GM12878 (cell line): ENCODE measurements at regions of chr3 and their contacts with region 1.

Region 1: DNA sequence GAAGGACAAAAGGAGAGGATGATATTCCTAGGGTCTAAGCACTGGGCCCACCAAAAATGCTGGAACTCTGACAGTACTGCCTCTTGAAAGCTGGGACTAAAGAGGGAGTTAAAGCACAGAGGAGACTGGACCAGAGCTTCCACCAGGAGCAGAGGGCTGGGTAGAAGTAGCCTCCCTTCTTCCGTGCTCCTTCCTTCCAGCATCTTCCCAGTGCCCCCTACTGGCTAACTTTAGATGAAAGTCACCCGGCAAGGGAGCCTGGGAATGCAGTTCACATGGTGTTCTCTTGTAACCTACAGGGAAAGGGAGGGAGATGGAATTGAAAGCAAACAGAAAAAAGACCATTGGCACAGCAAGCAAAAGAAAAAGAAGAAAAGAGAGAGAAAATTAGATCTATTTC is 106.1 kb upstream of the COL8A1 start:
- DNase-seq: no peak
- ATAC-seq: peak; percentile 84
- H3K4me3 ChIP-seq: no peak overlapping the region
- H3K27ac ChIP-seq: no peak overlapping the region
- H3K4me1 ChIP-seq: no peaks in the 10 kb centered on the region
- H3K27me3 ChIP-seq: no peaks in the 10 kb centered on the region
- CTCF ChIP-seq: peak; percentile 57 to 82 (median 78)
- EP300 ChIP-seq: no peak
- POLR2A ChIP-seq: no peak
- RAD21 ChIP-seq: peak; percentile 89

Region 2: GRCh38 chr3:99114565-99115291 is 417.5 kb before region 1 on chr3:
- CTCF ChIA-PET with region 1: interaction called, 4 read pairs
- POLR2A ChIA-PET with region 1: no interaction called
- RAD21 ChIA-PET with region 1: interaction called, 4 read pairs
- SMC1A ChIA-PET with region 1: no interaction called
- in situ Hi-C with region 1: no loop called
- intact Hi-C with region 1: loop called (anchors 10 kb)
- DNase-seq: no peak
- ATAC-seq: peak; percentile 87
- H3K4me3 ChIP-seq: no peak overlapping the region
- H3K27ac ChIP-seq: no peak overlapping the region
- H3K4me1 ChIP-seq: no peaks in the 10 kb centered on the region
- H3K27me3 ChIP-seq: no peaks in the 10 kb centered on the region
- CTCF ChIP-seq: peak; percentile 34 to 72 (median 61); a peak in 5 of 6 replicates
- EP300 ChIP-seq: no peak
- POLR2A ChIP-seq: no peak
- RAD21 ChIP-seq: peak; percentile 98

Region 3: DNA sequence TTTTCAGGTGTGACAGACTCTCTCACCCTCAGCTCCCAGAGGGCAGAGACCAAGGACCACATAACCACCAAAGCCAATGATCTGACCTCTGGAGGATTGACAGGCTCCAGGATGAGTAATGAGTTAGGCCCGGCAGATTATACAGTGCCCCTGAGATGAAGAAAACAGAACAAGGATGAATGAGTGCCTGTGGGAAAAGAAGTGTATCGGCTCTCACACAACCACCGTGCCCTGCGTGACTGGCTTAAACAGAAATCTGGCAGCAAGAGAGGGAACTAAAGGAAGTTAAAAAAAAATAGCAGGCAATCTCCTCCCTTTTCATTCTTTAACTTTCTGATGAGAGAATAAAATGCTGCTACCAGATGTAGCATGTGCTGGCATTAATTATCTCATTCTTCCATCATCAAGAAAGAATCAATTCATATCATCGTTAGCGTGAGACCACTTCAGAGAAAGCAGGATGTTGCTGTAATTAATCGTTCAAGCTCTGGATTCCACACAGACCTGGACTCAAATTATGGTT is 121.4 kb before region 1 on chr3:
- CTCF ChIA-PET with region 1: interaction called, 13 read pairs
- POLR2A ChIA-PET with region 1: no interaction called
- RAD21 ChIA-PET with region 1: interaction called, 7 read pairs
- SMC1A ChIA-PET with region 1: interaction called, 4 read pairs
- in situ Hi-C with region 1: no loop called
- intact Hi-C with region 1: no loop called
- DNase-seq: peak; percentile 48
- ATAC-seq: peak; percentile 87
- H3K4me3 ChIP-seq: no peak overlapping the region
- H3K27ac ChIP-seq: no peak overlapping the region; the same call in 1 of the 2 replicates
- H3K4me1 ChIP-seq: no peaks in the 10 kb centered on the region; the same call in 1 of the 2 replicates
- H3K27me3 ChIP-seq: no peaks in the 10 kb centered on the region
- CTCF ChIP-seq: no peak
- EP300 ChIP-seq: no peak
- POLR2A ChIP-seq: no peak
- RAD21 ChIP-seq: 0 out of 2 replicates have a peak, but pooled peaks have one; percentile 6

Region 4: DNA sequence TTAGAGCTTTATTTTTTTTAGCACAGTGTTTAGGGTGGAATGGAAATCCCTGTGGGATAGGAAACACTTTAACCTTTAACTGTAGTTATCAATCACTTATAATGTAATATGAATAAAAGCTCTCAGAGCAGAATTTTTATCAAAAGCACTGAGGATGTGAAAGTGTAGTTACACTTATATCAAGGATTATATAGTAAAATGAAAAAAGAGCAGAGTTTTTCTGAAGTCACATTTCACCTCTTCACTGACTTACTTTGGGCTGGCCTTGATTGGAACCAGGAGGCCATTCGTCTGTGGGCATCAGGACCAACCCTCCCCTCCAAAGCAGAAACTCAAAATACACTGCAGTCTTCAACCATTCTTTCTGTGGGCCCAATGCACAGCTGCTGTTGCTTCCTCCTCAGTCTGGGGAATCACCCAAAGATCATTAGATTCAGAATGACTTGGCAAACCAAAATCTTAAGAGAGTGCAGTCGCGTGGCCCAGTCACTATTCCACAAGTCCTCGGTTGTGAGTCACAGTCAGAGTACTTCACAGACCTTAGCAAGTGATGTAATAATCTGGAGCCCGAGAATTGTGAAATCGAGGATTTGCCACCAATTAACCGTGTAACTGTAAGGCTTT is 26.5 kb before region 1 on chr3:
- CTCF ChIA-PET with region 1: interaction called, 303 read pairs
- POLR2A ChIA-PET with region 1: interaction called, 3 read pairs
- RAD21 ChIA-PET with region 1: interaction called, 90 read pairs
- SMC1A ChIA-PET with region 1: interaction called, 270 read pairs
- in situ Hi-C with region 1: no loop called
- intact Hi-C with region 1: loop called (anchors 2 kb)
- DNase-seq: peak; percentile 91
- ATAC-seq: peak; percentile 97
- H3K4me3 ChIP-seq: no peak overlapping the region
- H3K27ac ChIP-seq: peak overlapping the region; percentile 41
- H3K4me1 ChIP-seq: peaks cover 6% of the 10 kb centered on the region; the same call in 1 of the 2 replicates
- H3K27me3 ChIP-seq: no peaks in the 10 kb centered on the region
- CTCF ChIP-seq: no peak
- EP300 ChIP-seq: peak; percentile 68 to 81; a peak in 3 of 4 replicates
- POLR2A ChIP-seq: no peak
- RAD21 ChIP-seq: peak; percentile 22; the same call in 1 of the 2 replicates